WTC11 (cell line): ENCODE measurements at regions of chr12 and their contacts with region 1.

Region 1: GRCh38 chr12:64551698-64552097 is 58.6 kb upstream of the RASSF3 start:
- DNase-seq: no peak
- ATAC-seq: no peak
- H3K4me3 Mint-ChIP-seq: no peak overlapping the region
- H3K27ac Mint-ChIP-seq: no peak overlapping the region
- H3K4me1 Mint-ChIP-seq: peaks cover 8% of the 10 kb centered on the region
- H3K27me3 Mint-ChIP-seq: no peaks in the 10 kb centered on the region; the same call in 1 of the 2 replicates
- CTCF ChIP-seq: no peak

Region 2: GRCh38 chr12:64571411-64571810 is 19.7 kb after region 1 on chr12:
- CTCF ChIA-PET with region 1: interaction called, 27 read pairs
- POLR2A ChIA-PET with region 1: no interaction called
- DNase-seq: no peak
- ATAC-seq: no peak
- H3K4me3 Mint-ChIP-seq: no peak overlapping the region
- H3K27ac Mint-ChIP-seq: no peak overlapping the region
- H3K4me1 Mint-ChIP-seq: peaks cover 16% of the 10 kb centered on the region
- H3K27me3 Mint-ChIP-seq: no peaks in the 10 kb centered on the region
- CTCF ChIP-seq: no peak

Region 3: GRCh38 chr12:64610149-64610678 is 58.5 kb after region 1 on chr12 and contains the start of gene RASSF3:
- CTCF ChIA-PET with region 1: interaction called, 29 read pairs
- POLR2A ChIA-PET with region 1: no interaction called
- DNase-seq: peak; percentile 85
- ATAC-seq: peak; percentile 79
- H3K4me3 Mint-ChIP-seq: peak within 1 kb of the TSS; percentile 94
- H3K27ac Mint-ChIP-seq: peak within 1 kb of the TSS; percentile 97
- H3K4me1 Mint-ChIP-seq: peaks cover 31% of the 10 kb centered on the region
- H3K27me3 Mint-ChIP-seq: no peaks in the 10 kb centered on the region
- CTCF ChIP-seq: no peak
- total RNA-seq, gene RASSF3: 45.2 to 54.7 TPM (median 50.2 TPM) in 3 replicates

Region 4: DNA sequence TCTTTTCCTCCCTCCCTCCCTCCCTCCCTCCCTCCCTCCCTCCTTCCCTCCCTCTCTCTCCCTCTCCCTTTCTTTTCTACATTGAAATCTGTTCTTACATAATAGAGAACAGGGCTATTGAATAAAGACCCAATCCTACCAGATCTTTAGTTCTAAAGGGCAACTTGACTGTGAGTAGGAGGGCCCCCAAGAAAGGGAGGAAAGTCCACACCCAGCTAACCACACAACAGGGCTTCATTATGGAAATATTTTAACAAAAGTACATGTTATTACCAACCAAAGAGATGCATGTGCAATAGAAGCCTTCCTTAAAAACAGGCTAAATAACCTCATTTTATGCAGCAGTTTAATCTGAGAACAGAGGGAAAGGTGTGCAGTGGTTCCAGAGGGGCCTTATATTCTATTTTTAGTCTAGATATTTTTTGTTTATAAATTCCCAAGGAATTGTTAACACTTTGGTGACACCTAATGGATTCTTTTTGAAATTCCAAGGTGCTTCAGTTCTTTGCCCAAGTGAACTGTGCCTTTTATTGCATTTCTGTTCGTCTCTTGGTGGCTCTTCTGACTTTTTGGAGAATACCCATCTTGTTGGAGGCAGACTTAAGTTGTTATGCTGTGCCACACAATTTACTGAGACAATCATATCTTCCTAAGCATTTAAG is 144.5 kb after region 1 on chr12:
- CTCF ChIA-PET with region 1: interaction called, 83 read pairs
- POLR2A ChIA-PET with region 1: interaction called, 3 read pairs
- DNase-seq: no peak
- ATAC-seq: no peak
- H3K4me3 Mint-ChIP-seq: no peak overlapping the region
- H3K27ac Mint-ChIP-seq: no peak overlapping the region
- H3K4me1 Mint-ChIP-seq: peaks cover 39% of the 10 kb centered on the region
- H3K27me3 Mint-ChIP-seq: no peaks in the 10 kb centered on the region
- CTCF ChIP-seq: no peak